ENCODE measurements at regions of chr17 and their contacts with region 1.

Region 1: DNA sequence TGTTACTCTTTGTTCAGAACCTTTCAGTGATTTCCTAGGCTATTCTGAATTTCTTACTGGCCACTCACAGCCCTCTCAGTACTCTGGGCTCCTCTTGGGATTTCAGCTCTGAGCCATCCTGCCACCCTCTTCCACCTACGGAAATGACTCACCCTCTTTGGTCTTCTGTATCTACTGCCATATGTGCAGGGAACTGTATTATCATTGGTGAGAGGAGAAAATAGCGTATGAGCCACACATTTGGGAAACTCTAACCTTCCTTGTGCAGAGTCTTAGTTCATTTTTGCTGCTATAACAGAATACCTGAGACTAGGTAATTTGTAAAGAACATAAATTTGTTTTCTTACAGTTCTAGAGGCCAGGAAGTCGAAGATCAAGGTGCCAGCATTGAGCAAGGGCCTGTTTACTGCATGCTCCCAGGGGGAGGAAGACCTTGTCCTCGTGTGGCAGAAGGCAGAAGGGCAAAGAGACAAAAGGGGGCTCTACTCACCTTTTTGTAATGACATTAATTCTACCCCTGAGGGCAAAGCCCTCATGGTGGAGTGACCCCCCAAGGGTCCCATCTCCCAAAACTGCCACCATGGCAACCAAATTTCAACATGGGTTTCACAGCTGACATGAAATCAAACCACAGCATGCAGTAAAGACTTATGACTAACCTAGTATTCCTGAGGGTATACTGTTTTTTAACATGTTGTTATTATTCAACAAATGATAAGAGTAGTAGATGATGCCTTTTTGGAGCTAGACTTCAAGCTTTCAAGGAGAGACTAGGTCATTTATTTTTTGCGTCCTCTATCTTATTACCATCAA is 191.8 kb downstream of the PRKCA start:
- DNase-seq: no peak
- H3K4me3 Mint-ChIP-seq: peak overlapping the region; percentile 2
- H3K27ac Mint-ChIP-seq: peak overlapping the region; percentile 67
- H3K4me1 Mint-ChIP-seq: peaks cover 38% of the 10 kb centered on the region
- H3K27me3 Mint-ChIP-seq: no peaks in the 10 kb centered on the region

Region 2: GRCh38 chr17:66508896-66509843 is 15.0 kb after region 1 on chr17:
- intact Hi-C with region 1: loop called (anchors 2 kb)
- DNase-seq: peak; percentile 25
- H3K4me3 Mint-ChIP-seq: peak overlapping the region; percentile 27
- H3K27ac Mint-ChIP-seq: peak overlapping the region; percentile 92
- H3K4me1 Mint-ChIP-seq: peaks cover 71% of the 10 kb centered on the region
- H3K27me3 Mint-ChIP-seq: no peaks in the 10 kb centered on the region

Region 3: GRCh38 chr17:66514227-66514806 is 20.1 kb after region 1 on chr17:
- intact Hi-C with region 1: loop called (anchors 2 kb)
- DNase-seq: no peak
- H3K4me3 Mint-ChIP-seq: no peak overlapping the region
- H3K27ac Mint-ChIP-seq: peak overlapping the region; percentile 69
- H3K4me1 Mint-ChIP-seq: peaks cover 70% of the 10 kb centered on the region
- H3K27me3 Mint-ChIP-seq: no peaks in the 10 kb centered on the region

Region 4: GRCh38 chr17:66555605-66556004 is 61.4 kb after region 1 on chr17:
- intact Hi-C with region 1: no loop called
- DNase-seq: no peak
- H3K4me3 Mint-ChIP-seq: no peak overlapping the region
- H3K27ac Mint-ChIP-seq: no peak overlapping the region
- H3K4me1 Mint-ChIP-seq: peaks cover 18% of the 10 kb centered on the region
- H3K27me3 Mint-ChIP-seq: no peaks in the 10 kb centered on the region

Region 5: GRCh38 chr17:66677199-66677981 is 183.2 kb after region 1 on chr17:
- intact Hi-C with region 1: no loop called
- DNase-seq: no peak
- H3K4me3 Mint-ChIP-seq: no peak overlapping the region
- H3K27ac Mint-ChIP-seq: peak overlapping the region; percentile 51
- H3K4me1 Mint-ChIP-seq: peaks cover 34% of the 10 kb centered on the region
- H3K27me3 Mint-ChIP-seq: no peaks in the 10 kb centered on the region

Region 6: GRCh38 chr17:67059372-67059771 is 565.2 kb after region 1 on chr17:
- intact Hi-C with region 1: no loop called
- DNase-seq: no peak
- H3K4me3 Mint-ChIP-seq: no peak overlapping the region
- H3K27ac Mint-ChIP-seq: no peak overlapping the region
- H3K4me1 Mint-ChIP-seq: no peaks in the 10 kb centered on the region
- H3K27me3 Mint-ChIP-seq: no peaks in the 10 kb centered on the region

Measured in activated T-helper 2 cell treated with anti-CD3 and anti-CD28 coated beads, Interferon-gamma antibody, Interleukin-2, Interleukin-4, amounts not matched to agents 10 μg/mL and 5 μg/mL and 100 μg/mL, durations not matched to agents 14 hours and 24 hours and 36 hours (primary cell).